Left lung (tissue), 14 donors: ENCODE measurements at regions of chr5 and their contacts with region 1.

Region 1: DNA sequence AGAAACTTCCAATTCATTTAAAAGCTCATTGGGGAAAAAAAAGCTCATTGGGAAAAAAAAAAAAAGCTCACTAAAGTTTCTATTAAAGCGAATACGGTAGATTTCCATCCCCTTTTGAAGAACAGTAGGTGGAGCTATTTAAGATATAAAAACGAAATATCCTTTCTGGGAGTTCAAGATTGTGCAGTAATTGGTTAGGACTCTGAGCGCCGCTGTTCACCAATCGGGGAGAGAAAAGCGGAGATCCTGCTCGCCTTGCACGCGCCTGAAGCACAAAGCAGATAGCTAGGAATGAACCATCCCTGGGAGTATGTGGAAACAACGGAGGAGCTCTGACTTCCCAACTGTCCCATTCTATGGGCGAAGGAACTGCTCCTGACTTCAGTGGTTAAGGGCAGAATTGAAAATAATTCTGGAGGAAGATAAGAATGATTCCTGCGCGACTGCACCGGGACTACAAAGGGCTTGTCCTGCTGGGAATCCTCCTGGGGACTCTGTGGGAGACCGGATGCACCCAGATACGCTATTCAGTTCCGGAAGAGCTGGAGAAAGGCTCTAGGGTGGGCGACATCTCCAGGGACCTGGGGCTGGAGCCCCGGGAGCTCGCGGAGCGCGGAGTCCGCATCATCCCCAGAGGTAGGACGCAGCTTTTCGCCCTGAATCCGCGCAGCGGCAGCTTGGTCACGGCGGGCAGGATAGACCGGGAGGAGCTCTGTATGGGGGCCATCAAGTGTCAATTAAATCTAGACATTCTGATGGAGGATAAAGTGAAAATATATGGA is at the start of gene PCDHGA12:
- DNase-seq: peak in 1 of 4 donors; percentile 25
- ATAC-seq: peak; percentile 75
- H3K4me3 ChIP-seq: peak within 1 kb of the TSS in 1 of 2 donors; percentile 14
- H3K27ac ChIP-seq: no peak within 1 kb of the TSS
- H3K4me1 ChIP-seq: peaks cover 0 to 4% of the 10 kb centered on the region in 2 donors
- H3K27me3 ChIP-seq: peaks cover 31 to 86% of the 10 kb centered on the region in 2 donors
- CTCF ChIP-seq: peak in 1 of 2 donors; percentile 21
- polyA plus RNA-seq, gene PCDHGA12: 2.0 to 4.5 (median 3.0) TPM

Region 2: DNA sequence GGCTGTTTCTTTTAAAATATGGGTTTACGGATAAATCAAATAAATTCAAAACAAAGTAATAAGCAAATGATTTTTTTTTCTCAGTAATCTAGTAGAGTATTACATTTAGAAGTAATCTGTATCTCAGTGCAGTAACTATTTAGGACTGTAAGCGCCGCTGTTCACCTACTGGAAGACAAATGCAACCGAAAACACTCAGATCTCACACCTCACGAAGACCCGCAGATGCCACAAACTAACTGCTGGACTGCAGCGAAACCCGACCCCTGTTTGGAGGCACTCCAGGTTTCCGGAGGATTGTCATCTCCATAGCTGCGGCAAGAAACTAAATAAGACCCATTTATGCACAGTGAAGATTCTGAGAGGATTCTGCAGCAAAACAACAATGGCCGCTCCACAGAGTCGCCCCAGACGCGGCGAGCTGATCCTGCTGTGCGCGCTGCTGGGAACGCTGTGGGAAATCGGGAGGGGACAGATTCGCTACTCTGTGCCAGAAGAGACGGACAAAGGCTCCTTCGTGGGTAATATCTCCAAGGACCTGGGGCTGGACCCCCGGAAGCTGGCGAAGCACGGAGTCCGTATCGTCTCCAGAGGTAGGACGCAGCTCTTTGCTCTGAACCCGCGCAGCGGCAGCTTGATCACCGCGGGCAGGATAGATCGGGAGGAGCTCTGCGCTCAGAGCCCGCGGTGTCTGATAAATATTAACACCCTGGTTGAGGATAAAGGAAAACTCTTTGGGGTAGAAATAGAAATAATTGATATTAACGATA is 37.9 kb before region 1 on chr5 and contains the start of gene PCDHGA8:
- intact Hi-C with region 1: loop called in 1 of 2 experiments (anchors 5 kb)
- DNase-seq: no peak
- ATAC-seq: no peak
- H3K4me3 ChIP-seq: no peak within 1 kb of the TSS
- H3K27ac ChIP-seq: no peak within 1 kb of the TSS
- H3K4me1 ChIP-seq: no peaks in the 10 kb centered on the region
- H3K27me3 ChIP-seq: peaks cover 5 to 89% of the 10 kb centered on the region in 2 donors
- CTCF ChIP-seq: no peak
- polyA plus RNA-seq, gene PCDHGA8: 0.38 to 0.99 (median 0.77) TPM